Spleen (tissue), 13 donors: ENCODE measurements at regions of chr3 and their contacts with region 1.

Region 1: GRCh38 chr3:16884084-16884747 is 539 bp upstream of the PLCL2 start:
- DNase-seq: peak; percentile 94
- H3K4me3 ChIP-seq: peak overlapping the region; percentile 69 to 88 (median 81)
- H3K27ac ChIP-seq: peak overlapping the region; percentile 94 to 99 (median 97)
- H3K4me1 ChIP-seq: peaks cover 20 to 49% (median 38%) of the 10 kb centered on the region in 6 donors
- H3K27me3 ChIP-seq: no peaks in the 10 kb centered on the region
- CTCF ChIP-seq: peak; percentile 28 to 83 (median 70)
- POLR2A ChIP-seq: no peak

Region 2: DNA sequence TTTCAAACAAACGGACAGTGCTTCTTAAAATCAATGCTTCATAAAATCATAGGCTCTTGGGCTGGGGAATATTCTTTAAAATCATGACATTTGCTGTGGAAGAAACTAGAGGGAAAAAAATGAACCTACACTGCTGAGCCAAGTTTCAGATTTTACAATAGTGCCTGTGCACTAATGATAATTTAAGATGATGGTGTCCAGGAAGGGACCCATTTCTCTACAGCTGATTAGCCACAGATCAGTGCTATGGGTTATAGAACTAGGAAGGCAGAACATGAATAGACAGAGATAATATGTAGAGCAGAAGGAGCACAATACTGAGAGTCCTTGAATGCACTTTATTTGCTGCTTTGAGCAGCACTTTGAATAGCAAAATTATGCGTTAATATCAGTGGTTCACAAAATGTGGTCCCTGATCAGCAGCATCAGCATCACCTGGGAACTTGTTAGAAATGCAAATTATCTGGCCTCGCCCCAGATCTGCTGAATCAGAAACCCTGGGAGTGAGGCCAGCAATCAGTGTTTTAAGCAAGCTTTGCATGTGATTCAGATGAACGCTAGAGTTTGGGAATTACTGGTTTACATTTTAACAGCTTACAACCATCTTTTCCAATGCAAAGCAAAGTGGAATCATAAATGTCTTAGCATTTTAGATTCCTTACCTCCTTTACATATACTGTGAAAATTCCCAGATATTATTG is 950.6 kb before region 1 on chr3:
- intact Hi-C with region 1: no loop called
- DNase-seq: no peak
- H3K4me3 ChIP-seq: no peak overlapping the region
- H3K27ac ChIP-seq: no peak overlapping the region
- H3K4me1 ChIP-seq: peaks cover 0 to 10% (median 2%) of the 10 kb centered on the region in 6 donors
- H3K27me3 ChIP-seq: no peaks in the 10 kb centered on the region
- CTCF ChIP-seq: no peak
- POLR2A ChIP-seq: no peak

Region 3: DNA sequence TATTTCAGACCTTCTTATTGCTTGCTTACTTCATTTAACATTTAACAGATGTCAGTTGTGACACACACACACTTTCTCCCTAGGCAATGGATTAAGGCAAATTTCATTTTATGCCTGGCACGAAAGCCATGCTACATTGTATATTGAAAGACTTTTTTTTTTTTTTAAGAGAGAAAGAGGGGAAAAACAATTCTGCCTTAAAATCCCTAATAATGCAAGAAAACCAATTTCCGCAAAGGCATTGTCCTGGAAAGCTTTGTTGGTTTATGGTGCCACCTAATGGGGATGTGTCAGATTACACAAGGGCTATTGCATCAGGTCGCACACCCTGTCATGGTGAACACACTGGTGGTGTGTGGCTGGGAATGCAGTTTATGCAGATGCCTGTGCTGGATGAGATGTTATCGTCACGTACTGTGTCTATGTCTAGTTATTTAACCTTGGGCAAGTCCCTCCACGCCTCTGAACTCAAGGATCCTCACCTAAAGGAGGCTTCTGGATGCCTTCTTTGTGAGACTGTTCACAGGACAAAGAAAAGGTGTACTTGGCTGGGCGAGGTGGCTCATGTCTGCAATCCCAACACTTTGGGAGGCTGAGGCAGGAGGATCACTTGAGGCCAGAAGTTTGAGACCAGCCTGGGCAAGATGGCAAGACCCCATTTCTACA is 333.4 kb before region 1 on chr3:
- intact Hi-C with region 1: no loop called
- DNase-seq: no peak
- H3K4me3 ChIP-seq: peak overlapping the region in 2 of 8 donors; percentile 8 to 15
- H3K27ac ChIP-seq: no peak overlapping the region
- H3K4me1 ChIP-seq: peaks cover 0 to 23% (median 7%) of the 10 kb centered on the region in 6 donors
- H3K27me3 ChIP-seq: no peaks in the 10 kb centered on the region
- CTCF ChIP-seq: peak; percentile 76 to 96 (median 91)
- POLR2A ChIP-seq: no peak

Region 4: DNA sequence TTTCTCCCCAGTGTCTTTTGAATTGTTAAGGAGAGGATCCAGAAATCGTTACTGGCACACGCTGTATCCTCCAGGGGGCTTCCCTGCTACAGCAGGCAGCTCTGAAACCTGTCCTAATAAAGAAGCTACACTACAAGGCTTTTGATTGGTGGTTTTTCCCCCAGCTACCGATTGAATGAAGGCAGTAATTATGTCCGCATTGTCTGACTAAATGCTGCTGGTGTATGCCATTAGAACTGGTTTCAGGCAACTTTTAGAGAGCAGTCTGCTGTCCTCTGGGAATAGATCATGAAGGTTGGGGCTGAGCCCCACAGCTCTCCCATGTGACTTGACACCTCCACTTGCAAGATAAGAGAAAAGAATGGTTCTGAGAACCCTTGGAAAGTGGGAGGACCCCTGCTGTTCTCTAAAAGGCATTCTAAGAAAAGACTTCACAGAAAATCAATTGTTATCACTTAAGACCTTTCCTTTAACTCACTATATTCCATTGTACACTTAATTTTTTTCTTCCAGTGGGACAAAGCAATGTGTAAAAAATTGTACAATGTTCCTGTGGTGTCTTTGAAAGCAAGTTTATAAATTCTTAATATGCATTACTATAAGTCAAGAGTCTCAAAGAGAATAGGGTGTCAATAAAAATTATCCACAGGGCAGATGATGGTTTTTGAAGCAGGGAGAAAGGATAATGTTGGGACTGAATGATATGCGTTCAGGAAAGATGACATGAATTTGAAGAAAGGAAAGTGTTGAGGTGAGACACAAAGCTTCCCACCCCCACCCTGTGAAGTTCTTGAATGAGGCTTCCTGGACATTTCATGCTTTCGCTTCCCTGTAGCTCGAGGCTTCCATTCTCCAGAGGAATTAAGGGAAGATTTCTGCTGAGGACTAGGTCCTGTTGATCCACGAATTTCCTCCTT is 226.0 kb before region 1 on chr3:
- intact Hi-C with region 1: no loop called
- DNase-seq: no peak
- H3K4me3 ChIP-seq: no peak overlapping the region
- H3K27ac ChIP-seq: no peak overlapping the region
- H3K4me1 ChIP-seq: no peaks in the 10 kb centered on the region
- H3K27me3 ChIP-seq: no peaks in the 10 kb centered on the region
- CTCF ChIP-seq: no peak
- POLR2A ChIP-seq: no peak

Region 5: GRCh38 chr3:16828815-16829214 is 55.4 kb before region 1 on chr3:
- intact Hi-C with region 1: no loop called
- DNase-seq: no peak
- H3K4me3 ChIP-seq: no peak overlapping the region
- H3K27ac ChIP-seq: no peak overlapping the region
- H3K4me1 ChIP-seq: peaks cover 0 to 15% (median 9%) of the 10 kb centered on the region in 6 donors
- H3K27me3 ChIP-seq: no peaks in the 10 kb centered on the region
- CTCF ChIP-seq: peak in 9 of 11 experiments; percentile 21 to 65 (median 49)
- POLR2A ChIP-seq: no peak

Region 6: GRCh38 chr3:17032407-17033034 is 148.3 kb after region 1 on chr3:
- intact Hi-C with region 1: loop called (anchors 10 kb)
- DNase-seq: no peak
- H3K4me3 ChIP-seq: no peak overlapping the region
- H3K27ac ChIP-seq: no peak overlapping the region
- H3K4me1 ChIP-seq: peaks cover 0 to 68% (median 32%) of the 10 kb centered on the region in 6 donors
- H3K27me3 ChIP-seq: no peaks in the 10 kb centered on the region
- CTCF ChIP-seq: peak in 9 of 11 experiments; percentile 40 to 78 (median 58)
- POLR2A ChIP-seq: no peak